Panc1 (cell line): ENCODE measurements at regions of chr2 and their contacts with region 1.

Region 1: GRCh38 chr2:52956766-52957165 is 810.8 kb upstream of the CHAC2 start:
- DNase-seq: no peak
- ATAC-seq: no peak
- H3K4me3 ChIP-seq: no peak overlapping the region
- H3K27ac ChIP-seq: no peak overlapping the region
- H3K4me1 ChIP-seq: no peaks in the 10 kb centered on the region
- H3K27me3 ChIP-seq: no peaks in the 10 kb centered on the region
- CTCF ChIP-seq: no peak

Region 2: GRCh38 chr2:52238782-52239181 is 718.0 kb before region 1 on chr2:
- CTCF ChIA-PET with region 1: no interaction called
- POLR2A ChIA-PET with region 1: no interaction called
- in situ Hi-C with region 1: no loop called
- intact Hi-C with region 1: loop called (anchors 5 kb)
- DNase-seq: no peak
- ATAC-seq: no peak
- H3K4me3 ChIP-seq: no peak overlapping the region
- H3K27ac ChIP-seq: no peak overlapping the region
- H3K4me1 ChIP-seq: no peaks in the 10 kb centered on the region
- H3K27me3 ChIP-seq: no peaks in the 10 kb centered on the region
- CTCF ChIP-seq: no peak